Astrocyte of the cerebellum (primary cell): ENCODE measurements at regions of chr14 and their contacts with region 1.

Region 1: GRCh38 chr14:105358140-105358846 is 40.0 kb upstream of the TEX22 start:
- DNase-seq: no peak
- H3K4me3 ChIP-seq: no peak overlapping the region
- CTCF ChIP-seq: no peak

Region 2: GRCh38 chr14:105400016-105400415 is 41.7 kb after region 1 on chr14:
- in situ Hi-C with region 1: loop called (anchors 5 kb)
- DNase-seq: no peak
- H3K4me3 ChIP-seq: no peak overlapping the region
- CTCF ChIP-seq: no peak